Heart right ventricle (tissue), 16 donors: ENCODE measurements at regions of chr3 and their contacts with region 1.

Region 1: GRCh38 chr3:120245386-120245785 is 39.6 kb downstream of the GPR156 start:
- DNase-seq: no peak
- ATAC-seq: no peak
- H3K4me3 ChIP-seq: no peak overlapping the region
- H3K27ac ChIP-seq: no peak overlapping the region
- H3K4me1 ChIP-seq: no peaks in the 10 kb centered on the region
- H3K27me3 ChIP-seq: peaks cover 0 to 9% (median 0%) of the 10 kb centered on the region in 7 donors
- CTCF ChIP-seq: no peak

Region 2: GRCh38 chr3:120348981-120349818 is 103.8 kb after region 1 on chr3 and contains the start of gene LRRC58:
- intact Hi-C with region 1: loop called in 1 of 10 experiments (anchors 10 kb)
- DNase-seq: peak; percentile 85 to 92
- ATAC-seq: peak; percentile 97 to 99 (median 98)
- H3K4me3 ChIP-seq: peak within 1 kb of the TSS; percentile 54 to 98 (median 89)
- H3K27ac ChIP-seq: peak within 1 kb of the TSS; percentile 53 to 94 (median 89)
- H3K4me1 ChIP-seq: peaks cover 0 to 55% (median 13%) of the 10 kb centered on the region in 9 donors
- H3K27me3 ChIP-seq: no peaks in the 10 kb centered on the region
- CTCF ChIP-seq: peak in 6 of 9 donors; percentile 14 to 61 (median 42)
- total RNA-seq, gene LRRC58: 6.9 to 12.1 (median 9.1) TPM

Region 3: DNA sequence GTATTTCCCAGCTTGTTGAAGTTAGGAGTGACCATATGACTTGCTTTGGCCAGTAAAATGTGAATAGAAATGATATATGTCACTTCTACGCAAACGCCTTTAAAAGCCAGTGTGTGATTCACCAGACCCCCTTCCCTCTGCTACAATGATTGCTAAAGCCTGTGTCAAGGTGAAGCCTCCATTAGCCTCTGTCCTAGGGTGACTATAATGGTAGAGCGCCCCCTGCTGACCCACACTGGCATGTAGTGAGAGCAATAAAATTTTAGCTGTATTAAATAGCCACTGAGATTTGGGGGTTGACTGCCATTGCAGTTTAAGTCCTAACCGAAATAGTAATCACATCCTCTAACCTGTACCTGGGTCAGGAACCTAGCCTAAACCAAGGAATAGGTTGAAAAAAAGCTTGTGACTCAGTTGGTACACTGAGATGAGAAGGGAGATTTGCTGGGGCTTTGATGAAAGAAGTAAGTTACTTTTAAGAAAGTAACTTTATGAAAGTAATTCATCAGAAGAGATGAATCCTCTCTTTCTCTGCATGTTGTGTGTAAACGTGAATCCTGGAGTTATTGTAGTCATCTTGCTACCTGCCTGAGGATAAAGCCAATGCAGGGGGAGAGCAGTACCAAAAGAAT is 549.7 kb after region 1 on chr3:
- intact Hi-C with region 1: loop called in 7 of 10 experiments (anchors 5 to 10 kb)
- DNase-seq: peak; percentile 74 to 77
- ATAC-seq: peak; percentile 79 to 94 (median 88)
- H3K4me3 ChIP-seq: no peak overlapping the region
- H3K27ac ChIP-seq: no peak overlapping the region
- H3K4me1 ChIP-seq: no peaks in the 10 kb centered on the region
- H3K27me3 ChIP-seq: no peaks in the 10 kb centered on the region
- CTCF ChIP-seq: peak; percentile 63 to 86 (median 81)